PC-9 (cell line): ENCODE measurements at regions of chr10 and their contacts with region 1.

Region 1: DNA sequence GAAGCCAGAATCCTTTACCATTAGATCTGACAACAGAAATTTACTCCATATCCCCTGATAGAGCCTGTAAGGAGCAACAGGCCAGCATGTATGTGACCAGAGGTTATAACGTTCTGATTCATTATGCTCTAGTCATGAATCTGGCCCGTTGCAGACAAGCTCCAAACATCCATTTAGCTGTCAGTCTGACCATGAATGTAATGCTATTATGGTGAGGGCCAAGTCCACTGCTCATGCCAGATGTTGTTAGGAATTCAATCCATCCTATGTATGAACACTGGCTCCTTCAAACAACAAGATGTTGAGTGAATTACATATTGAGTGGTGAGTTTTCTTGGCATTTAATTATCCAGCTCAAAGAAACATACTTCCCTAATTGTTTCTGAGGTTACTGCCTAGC is 610.1 kb upstream of the ANKRD30A start:
- DNase-seq: no peak
- H3K4me3 ChIP-seq: no peak overlapping the region
- H3K27ac ChIP-seq: no peak overlapping the region
- H3K4me1 ChIP-seq: no peaks in the 10 kb centered on the region
- H3K27me3 ChIP-seq: no peaks in the 10 kb centered on the region
- CTCF ChIP-seq: no peak

Region 2: GRCh38 chr10:36450380-36450779 is 64.9 kb before region 1 on chr10:
- CTCF ChIA-PET with region 1: no interaction called
- POLR2A ChIA-PET with region 1: no interaction called
- intact Hi-C with region 1: no loop called
- DNase-seq: no peak
- H3K4me3 ChIP-seq: no peak overlapping the region
- H3K27ac ChIP-seq: no peak overlapping the region
- H3K4me1 ChIP-seq: no peaks in the 10 kb centered on the region
- H3K27me3 ChIP-seq: no peaks in the 10 kb centered on the region
- CTCF ChIP-seq: no peak

Region 3: DNA sequence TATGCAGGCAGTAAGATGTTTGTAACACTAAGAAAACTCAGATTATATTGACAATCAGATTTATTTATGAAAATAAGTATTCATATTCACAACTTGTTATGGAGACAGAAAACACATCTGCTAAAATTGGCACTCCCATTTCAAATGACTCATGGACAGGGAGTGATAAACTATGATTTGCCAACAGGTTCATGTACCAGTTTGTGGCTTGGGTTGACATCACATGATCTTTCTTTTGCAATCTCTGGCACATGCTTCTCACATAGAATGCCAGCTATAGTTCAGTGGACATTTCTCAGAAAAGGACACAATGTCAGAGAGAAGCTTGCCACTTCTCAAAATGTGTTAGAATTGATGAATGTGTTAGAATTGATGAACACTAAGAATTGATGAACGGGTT is 53.1 kb before region 1 on chr10:
- CTCF ChIA-PET with region 1: no interaction called
- POLR2A ChIA-PET with region 1: no interaction called
- intact Hi-C with region 1: loop called (anchors 2 kb)
- DNase-seq: no peak
- H3K4me3 ChIP-seq: no peak overlapping the region
- H3K27ac ChIP-seq: no peak overlapping the region
- H3K4me1 ChIP-seq: no peaks in the 10 kb centered on the region
- H3K27me3 ChIP-seq: no peaks in the 10 kb centered on the region
- CTCF ChIP-seq: no peak